ENCODE measurements at regions of chr5 and their contacts with region 1.

Region 1: GRCh38 chr5:134648425-134649162 is at the start of gene SEC24A:
- DNase-seq: peak; percentile 83 to 93 (median 86)
- ATAC-seq: peak; percentile 92
- H3K4me3 ChIP-seq: peak within 1 kb of the TSS; percentile 76
- H3K4me3 Mint-ChIP-seq: peak within 1 kb of the TSS; percentile 89 to 100 (median 98)
- H3K27ac ChIP-seq: peak within 1 kb of the TSS; percentile 91
- H3K27ac Mint-ChIP-seq: peak within 1 kb of the TSS; percentile 94 to 100 (median 99)
- H3K4me1 ChIP-seq: peaks cover 7 to 9% of the 10 kb centered on the region in 2 donors
- H3K4me1 Mint-ChIP-seq: peaks cover 13 to 40% (median 26%) of the 10 kb centered on the region in 7 donors
- H3K27me3 ChIP-seq: no peaks in the 10 kb centered on the region
- H3K27me3 Mint-ChIP-seq: no peaks in the 10 kb centered on the region
- total RNA-seq, gene SEC24A: 13.6 to 30.9 (median 16.0) TPM

Region 2: DNA sequence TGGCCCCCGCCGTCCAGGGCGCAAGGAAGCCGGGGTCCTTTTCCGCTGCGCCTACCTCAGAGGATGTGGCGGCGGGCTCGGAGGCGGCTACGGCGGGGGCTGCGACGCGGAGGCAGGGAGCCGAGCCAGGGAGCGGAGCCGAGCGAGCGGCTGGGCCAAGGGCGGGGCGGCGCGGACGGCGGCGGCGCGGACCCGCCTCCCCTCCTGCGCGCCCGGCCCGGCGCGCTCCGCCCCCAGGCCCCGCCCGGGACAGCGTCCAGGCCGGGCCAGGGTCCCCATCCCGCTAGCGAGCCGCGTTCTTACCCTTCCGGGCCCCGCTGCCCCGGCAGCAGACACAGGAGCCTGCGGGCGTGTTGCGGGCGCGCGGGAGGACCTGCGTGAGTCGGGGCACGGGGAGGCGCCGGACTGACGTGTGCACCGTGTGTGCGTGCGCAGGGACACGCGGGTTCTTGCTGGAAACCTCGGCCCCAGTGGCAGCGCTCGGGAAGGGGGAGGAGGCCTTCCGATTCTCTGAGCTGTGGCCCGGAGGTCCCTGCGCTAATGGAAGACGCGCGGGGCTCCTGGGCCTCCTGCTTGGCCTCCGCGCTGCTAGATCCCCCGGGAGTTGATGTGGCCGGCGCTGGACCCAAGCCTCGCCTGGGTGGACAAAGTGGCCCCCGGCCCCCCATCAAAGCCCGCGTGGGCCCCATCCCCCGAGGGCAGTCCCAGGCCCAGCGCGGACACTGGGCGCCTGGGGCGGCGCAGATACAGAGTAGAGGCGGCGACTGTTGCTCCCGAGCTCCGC is 643.8 kb before region 1 on chr5 and contains the start of gene VDAC1:
- CTCF ChIA-PET with region 1: no interaction called
- POLR2A ChIA-PET with region 1: interaction called, 4 read pairs
- intact Hi-C with region 1: loop called in 1 of 2 experiments (anchors 1 kb)
- DNase-seq: peak; percentile 74 to 92 (median 89)
- ATAC-seq: peak; percentile 85
- H3K4me3 ChIP-seq: peak within 1 kb of the TSS; percentile 83
- H3K4me3 Mint-ChIP-seq: peak within 1 kb of the TSS; percentile 89 to 97 (median 92)
- H3K27ac ChIP-seq: peak within 1 kb of the TSS; percentile 98
- H3K27ac Mint-ChIP-seq: peak within 1 kb of the TSS; percentile 86 to 97 (median 96)
- H3K4me1 ChIP-seq: peaks cover 17 to 26% of the 10 kb centered on the region in 2 donors
- H3K4me1 Mint-ChIP-seq: peaks cover 25 to 47% (median 43%) of the 10 kb centered on the region in 7 donors
- H3K27me3 ChIP-seq: no peaks in the 10 kb centered on the region
- H3K27me3 Mint-ChIP-seq: no peaks in the 10 kb centered on the region
- total RNA-seq, gene VDAC1: 37.8 to 259 (median 43.7) TPM

Region 3: DNA sequence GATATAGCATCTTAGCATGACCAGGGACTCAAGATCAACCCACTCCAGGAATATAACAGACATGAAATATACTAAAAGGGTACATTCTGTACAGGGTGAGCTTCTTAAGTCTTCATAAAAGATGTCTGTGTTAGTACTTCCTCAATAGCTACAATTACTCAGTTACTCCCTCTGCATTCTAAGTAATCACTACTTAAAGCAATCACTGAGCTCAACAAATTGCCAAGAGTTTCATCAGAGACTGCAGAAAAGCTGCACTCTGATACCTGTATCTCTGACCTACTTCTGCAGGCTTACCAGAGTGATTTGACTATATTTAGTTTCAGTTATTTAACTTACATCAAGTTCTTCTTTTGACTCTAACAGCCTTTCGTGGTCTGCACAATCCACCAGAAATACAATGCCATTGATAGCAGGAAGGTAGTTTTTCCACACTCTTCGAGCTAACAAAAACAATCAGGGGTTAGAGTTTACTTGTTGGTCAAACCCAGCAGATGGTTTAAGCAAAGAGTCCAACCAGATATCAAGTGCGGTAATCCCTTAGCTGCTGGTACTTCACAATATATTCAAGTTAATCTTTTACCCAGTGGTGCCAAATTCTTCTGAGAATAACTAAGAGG is 39.3 kb before region 1 on chr5:
- CTCF ChIA-PET with region 1: no interaction called
- POLR2A ChIA-PET with region 1: no interaction called
- intact Hi-C with region 1: loop called in 1 of 2 experiments (anchors 1 kb)
- DNase-seq: no peak
- ATAC-seq: no peak
- H3K4me3 ChIP-seq: no peak overlapping the region
- H3K4me3 Mint-ChIP-seq: peak overlapping the region in 1 of 10 donors; percentile 70
- H3K27ac ChIP-seq: no peak overlapping the region
- H3K27ac Mint-ChIP-seq: peak overlapping the region in 8 of 9 donors; percentile 11 to 94 (median 50)
- H3K4me1 ChIP-seq: no peaks in the 10 kb centered on the region
- H3K4me1 Mint-ChIP-seq: peaks cover 0 to 39% (median 8%) of the 10 kb centered on the region in 7 donors
- H3K27me3 ChIP-seq: no peaks in the 10 kb centered on the region
- H3K27me3 Mint-ChIP-seq: no peaks in the 10 kb centered on the region

Region 4: DNA sequence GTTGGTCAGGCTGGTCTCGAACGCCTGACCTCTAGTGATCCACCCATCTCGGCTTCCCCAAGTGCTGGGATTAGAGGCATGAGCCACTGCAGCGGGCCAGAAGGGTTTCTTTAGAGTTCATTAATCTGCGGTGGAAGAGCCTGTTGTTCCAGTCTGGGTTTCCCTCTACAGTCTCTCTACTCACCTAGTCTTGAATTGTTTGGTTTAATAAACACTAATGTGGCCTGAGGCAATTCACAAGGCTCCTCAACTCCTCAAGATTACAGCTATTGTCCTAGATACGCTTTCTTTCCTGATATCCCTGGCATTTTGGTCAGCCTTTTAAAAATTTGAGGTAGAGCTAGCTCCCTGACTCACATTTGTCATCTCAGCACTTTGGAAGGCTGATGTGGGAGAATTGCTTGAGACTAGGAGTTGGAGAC is 11.4 kb before region 1 on chr5:
- CTCF ChIA-PET with region 1: interaction called, 3 read pairs
- POLR2A ChIA-PET with region 1: interaction called, 16 read pairs
- intact Hi-C with region 1: loop called (anchors 1 kb)
- DNase-seq: no peak
- ATAC-seq: no peak
- H3K4me3 ChIP-seq: no peak overlapping the region
- H3K4me3 Mint-ChIP-seq: no peak overlapping the region
- H3K27ac ChIP-seq: no peak overlapping the region
- H3K27ac Mint-ChIP-seq: no peak overlapping the region
- H3K4me1 ChIP-seq: no peaks in the 10 kb centered on the region
- H3K4me1 Mint-ChIP-seq: peaks cover 0 to 10% (median 4%) of the 10 kb centered on the region in 7 donors
- H3K27me3 ChIP-seq: no peaks in the 10 kb centered on the region
- H3K27me3 Mint-ChIP-seq: no peaks in the 10 kb centered on the region

Region 5: GRCh38 chr5:134873987-134874830 is 225.6 kb after region 1 on chr5 and contains the start of gene TXNDC15:
- CTCF ChIA-PET with region 1: no interaction called
- POLR2A ChIA-PET with region 1: no interaction called
- intact Hi-C with region 1: loop called in 1 of 2 experiments (anchors 1 kb)
- DNase-seq: peak; percentile 69 to 86 (median 78)
- ATAC-seq: peak; percentile 98
- H3K4me3 ChIP-seq: peak within 1 kb of the TSS; percentile 95
- H3K4me3 Mint-ChIP-seq: peak within 1 kb of the TSS; percentile 89 to 98 (median 94)
- H3K27ac ChIP-seq: peak within 1 kb of the TSS; percentile 88
- H3K27ac Mint-ChIP-seq: peak within 1 kb of the TSS; percentile 91 to 97 (median 95)
- H3K4me1 ChIP-seq: peaks cover 16 to 32% of the 10 kb centered on the region in 2 donors
- H3K4me1 Mint-ChIP-seq: peaks cover 31 to 51% (median 45%) of the 10 kb centered on the region in 7 donors
- H3K27me3 ChIP-seq: no peaks in the 10 kb centered on the region
- H3K27me3 Mint-ChIP-seq: no peaks in the 10 kb centered on the region
- total RNA-seq, gene TXNDC15: 24.2 to 71.3 (median 36.8) TPM

Measured in naive thymus-derived CD4-positive, alpha-beta T cell (primary cell).